Heart left ventricle (tissue), 16 donors: ENCODE measurements at regions of chr4 and their contacts with region 1.

Region 1: GRCh38 chr4:169619959-169620879 is at the start of gene CLCN3:
- DNase-seq: peak; percentile 98 to 99 (median 99)
- ATAC-seq: peak; percentile 99
- H3K4me3 ChIP-seq: peak within 1 kb of the TSS; percentile 55 to 84 (median 71)
- H3K27ac ChIP-seq: peak within 1 kb of the TSS; percentile 87 to 97 (median 94)
- H3K4me1 ChIP-seq: peaks cover 0 to 34% (median 22%) of the 10 kb centered on the region in 12 donors
- H3K27me3 ChIP-seq: no peaks in the 10 kb centered on the region
- CTCF ChIP-seq: peak in 6 of 12 donors; percentile 16 to 54 (median 38)
- POLR2A ChIP-seq: peak; percentile 8 to 92
- total RNA-seq, gene CLCN3: 46.4 to 86.2 (median 59.3) TPM

Region 2: DNA sequence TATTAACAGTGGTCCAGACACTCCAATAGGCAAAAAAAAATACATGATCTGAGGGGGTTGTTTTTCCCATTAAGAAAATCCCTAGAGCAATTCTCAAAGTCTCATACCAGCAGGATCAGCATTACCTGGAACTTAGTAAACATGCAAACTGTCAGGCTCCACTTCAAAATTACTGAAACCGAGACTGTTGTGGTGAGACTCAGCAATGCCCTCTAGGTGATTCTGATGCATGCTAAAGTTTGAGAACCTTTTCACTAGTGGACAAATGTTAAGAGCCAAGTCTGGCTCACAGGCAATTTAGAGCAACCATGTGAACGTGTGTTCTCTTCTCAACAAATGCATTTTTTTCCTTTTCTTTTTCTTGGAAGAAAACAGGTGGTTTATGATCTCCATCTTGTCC is 38.0 kb before region 1 on chr4:
- intact Hi-C with region 1: no loop called
- DNase-seq: no peak
- ATAC-seq: no peak
- H3K4me3 ChIP-seq: no peak overlapping the region
- H3K27ac ChIP-seq: no peak overlapping the region
- H3K4me1 ChIP-seq: no peaks in the 10 kb centered on the region
- H3K27me3 ChIP-seq: no peaks in the 10 kb centered on the region
- CTCF ChIP-seq: no peak
- POLR2A ChIP-seq: no peak

Region 3: DNA sequence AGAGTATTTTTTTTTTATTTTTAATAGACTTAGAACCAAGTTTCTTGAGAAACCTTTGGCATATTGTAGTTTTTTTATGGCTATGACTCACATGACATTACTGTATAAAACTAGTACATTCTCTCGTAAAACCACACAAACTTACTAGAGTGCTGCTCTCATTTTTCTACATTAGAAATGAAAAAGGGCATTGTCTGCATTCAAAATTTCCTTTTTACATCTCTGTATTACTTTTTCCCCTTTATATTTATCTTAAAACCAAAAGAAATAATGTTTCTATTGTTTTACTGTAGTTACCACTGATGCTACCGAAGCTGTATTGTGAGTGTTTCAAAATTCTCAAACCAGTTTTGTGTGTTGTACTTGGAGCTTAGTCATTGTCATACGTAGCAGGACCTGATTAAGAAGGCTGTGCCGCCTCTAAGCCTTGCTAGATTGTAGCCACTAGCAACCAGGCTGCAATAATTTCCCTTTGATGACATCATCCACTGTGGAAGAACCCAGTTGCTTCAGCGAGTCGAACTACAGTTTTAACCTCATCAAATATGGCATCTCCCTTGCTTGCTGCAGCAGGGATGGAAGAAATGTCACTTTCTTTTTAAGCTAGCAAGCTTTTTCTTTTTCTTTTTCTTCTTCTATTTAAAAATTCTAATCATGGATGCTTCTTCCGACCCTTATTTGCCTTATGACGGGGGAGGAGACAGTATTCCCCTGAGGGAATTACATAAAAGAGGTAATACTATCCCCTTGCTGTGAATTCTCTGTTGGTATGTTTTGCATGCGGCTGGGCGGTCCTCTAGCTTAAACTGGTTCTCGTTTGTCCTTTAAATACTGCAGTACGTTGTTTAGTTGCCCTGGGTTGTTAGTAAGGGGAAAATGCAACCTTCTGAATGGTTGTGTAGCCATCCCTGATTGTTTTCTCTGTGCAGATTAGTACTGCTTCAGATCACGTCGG is 39.8 kb after region 1 on chr4:
- intact Hi-C with region 1: loop called in 9 of 10 experiments (anchors 1 to 5 kb)
- DNase-seq: peak in 4 of 5 donors; percentile 75 to 86 (median 81)
- ATAC-seq: peak; percentile 96 to 99 (median 98)
- H3K4me3 ChIP-seq: peak overlapping the region; percentile 9 to 61 (median 53)
- H3K27ac ChIP-seq: peak overlapping the region; percentile 67 to 89 (median 85)
- H3K4me1 ChIP-seq: peaks cover 0 to 43% (median 31%) of the 10 kb centered on the region in 12 donors
- H3K27me3 ChIP-seq: no peaks in the 10 kb centered on the region
- CTCF ChIP-seq: no peak
- POLR2A ChIP-seq: peak in 1 of 2 donors; percentile 56

Region 4: GRCh38 chr4:169716677-169717076 is 96.5 kb after region 1 on chr4:
- intact Hi-C with region 1: loop called in 5 of 10 experiments (anchors 5 to 10 kb)
- DNase-seq: no peak
- ATAC-seq: no peak
- H3K4me3 ChIP-seq: no peak overlapping the region
- H3K27ac ChIP-seq: no peak overlapping the region
- H3K4me1 ChIP-seq: no peaks in the 10 kb centered on the region
- H3K27me3 ChIP-seq: no peaks in the 10 kb centered on the region
- CTCF ChIP-seq: no peak
- POLR2A ChIP-seq: no peak

Region 5: GRCh38 chr4:169727616-169728015 is 107.4 kb after region 1 on chr4:
- intact Hi-C with region 1: no loop called
- DNase-seq: no peak
- ATAC-seq: no peak
- H3K4me3 ChIP-seq: no peak overlapping the region
- H3K27ac ChIP-seq: no peak overlapping the region
- H3K4me1 ChIP-seq: no peaks in the 10 kb centered on the region
- H3K27me3 ChIP-seq: no peaks in the 10 kb centered on the region
- CTCF ChIP-seq: no peak
- POLR2A ChIP-seq: no peak

Region 6: GRCh38 chr4:169802873-169803272 is 182.7 kb after region 1 on chr4:
- intact Hi-C with region 1: loop called in 1 of 10 experiments (anchors 10 kb)
- DNase-seq: no peak
- ATAC-seq: no peak
- H3K4me3 ChIP-seq: no peak overlapping the region
- H3K27ac ChIP-seq: no peak overlapping the region
- H3K4me1 ChIP-seq: no peaks in the 10 kb centered on the region
- H3K27me3 ChIP-seq: no peaks in the 10 kb centered on the region
- CTCF ChIP-seq: no peak
- POLR2A ChIP-seq: no peak

Region 7: GRCh38 chr4:170047771-170048354 is 427.6 kb after region 1 on chr4:
- intact Hi-C with region 1: loop called in 5 of 10 experiments (anchors 5 to 10 kb)
- DNase-seq: peak in 2 of 5 donors; percentile 16 to 43
- ATAC-seq: no peak
- H3K4me3 ChIP-seq: no peak overlapping the region
- H3K27ac ChIP-seq: no peak overlapping the region
- H3K4me1 ChIP-seq: no peaks in the 10 kb centered on the region
- H3K27me3 ChIP-seq: no peaks in the 10 kb centered on the region
- CTCF ChIP-seq: peak; percentile 60 to 88 (median 80)
- POLR2A ChIP-seq: no peak